Activated CD4-positive, alpha-beta T cell treated with anti-CD3 and anti-CD28 coated beads, Interleukin-2, amount 10 ng/mL, durations not matched to agents 24 days and 14 days (primary cell): ENCODE measurements at regions of chr19 and their contacts with region 1.

Region 1: GRCh38 chr19:33235269-33235995 is 9.8 kb upstream of the SLC7A10 start:
- DNase-seq: peak; percentile 92
- H3K4me3 Mint-ChIP-seq: no peak overlapping the region
- H3K27ac Mint-ChIP-seq: no peak overlapping the region
- H3K4me1 Mint-ChIP-seq: peaks cover 2% of the 10 kb centered on the region
- H3K27me3 Mint-ChIP-seq: peaks cover 4% of the 10 kb centered on the region

Region 2: GRCh38 chr19:33143897-33144405 is 91.5 kb before region 1 on chr19:
- intact Hi-C with region 1: loop called (anchors 10 kb)
- DNase-seq: peak; percentile 90
- H3K4me3 Mint-ChIP-seq: no peak overlapping the region
- H3K27ac Mint-ChIP-seq: no peak overlapping the region
- H3K4me1 Mint-ChIP-seq: peaks cover 4% of the 10 kb centered on the region
- H3K27me3 Mint-ChIP-seq: peaks cover 2% of the 10 kb centered on the region

Region 3: DNA sequence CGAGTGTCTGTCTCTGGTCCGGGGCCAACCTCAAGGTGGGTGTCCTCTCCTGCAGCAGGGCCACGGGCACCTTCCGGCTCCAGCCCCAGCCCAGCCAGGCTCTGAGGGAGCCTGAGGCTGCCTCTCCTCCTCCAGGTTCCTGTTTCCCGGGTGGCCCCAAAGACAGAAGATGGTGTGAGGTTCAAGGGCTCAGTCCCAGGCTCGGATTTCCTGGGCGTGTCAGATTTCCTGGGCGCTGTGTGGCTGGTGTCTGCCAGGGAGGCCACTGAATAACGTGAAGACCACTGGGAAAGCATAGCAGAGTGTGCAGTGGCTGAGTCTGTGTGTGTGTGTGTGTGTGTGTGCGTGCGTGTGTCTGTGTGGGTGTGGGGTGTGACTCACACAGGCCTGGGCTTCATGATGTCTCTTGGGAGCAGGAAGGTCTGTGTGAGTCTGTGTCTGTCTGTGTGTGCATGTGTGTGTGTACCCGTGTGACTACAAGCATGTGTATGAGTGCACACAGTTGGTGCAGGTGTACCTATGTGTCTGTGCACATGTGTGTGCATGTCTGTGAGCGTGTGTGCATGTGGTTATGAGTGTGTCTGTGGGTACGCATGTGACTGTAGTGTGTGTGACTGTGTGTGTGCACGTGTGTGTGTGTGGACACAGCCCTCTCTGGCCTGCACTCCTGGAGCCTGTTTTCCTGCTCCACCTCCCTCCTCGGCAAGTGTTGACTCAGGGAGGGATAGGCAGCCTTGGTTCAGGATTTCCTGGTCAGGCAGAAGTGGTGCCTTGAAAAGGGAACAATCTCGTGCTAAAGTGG is 38.6 kb after region 1 on chr19:
- intact Hi-C with region 1: loop called (anchors 5 kb)
- DNase-seq: peak; percentile 64
- H3K4me3 Mint-ChIP-seq: no peak overlapping the region
- H3K27ac Mint-ChIP-seq: peak overlapping the region; percentile 10
- H3K4me1 Mint-ChIP-seq: peaks cover 2% of the 10 kb centered on the region
- H3K27me3 Mint-ChIP-seq: no peaks in the 10 kb centered on the region

Region 4: GRCh38 chr19:33302175-33302973 is 66.9 kb after region 1 on chr19 and contains the start of gene CEBPA:
- intact Hi-C with region 1: loop called (anchors 2 kb)
- DNase-seq: peak; percentile 87
- H3K4me3 Mint-ChIP-seq: peak within 1 kb of the TSS; percentile 72
- H3K27ac Mint-ChIP-seq: no peak within 1 kb of the TSS
- H3K4me1 Mint-ChIP-seq: no peaks in the 10 kb centered on the region
- H3K27me3 Mint-ChIP-seq: peaks cover 45% of the 10 kb centered on the region
- total RNA-seq, gene CEBPA: 1.2 and 1.4 TPM in 2 replicates

Region 5: DNA sequence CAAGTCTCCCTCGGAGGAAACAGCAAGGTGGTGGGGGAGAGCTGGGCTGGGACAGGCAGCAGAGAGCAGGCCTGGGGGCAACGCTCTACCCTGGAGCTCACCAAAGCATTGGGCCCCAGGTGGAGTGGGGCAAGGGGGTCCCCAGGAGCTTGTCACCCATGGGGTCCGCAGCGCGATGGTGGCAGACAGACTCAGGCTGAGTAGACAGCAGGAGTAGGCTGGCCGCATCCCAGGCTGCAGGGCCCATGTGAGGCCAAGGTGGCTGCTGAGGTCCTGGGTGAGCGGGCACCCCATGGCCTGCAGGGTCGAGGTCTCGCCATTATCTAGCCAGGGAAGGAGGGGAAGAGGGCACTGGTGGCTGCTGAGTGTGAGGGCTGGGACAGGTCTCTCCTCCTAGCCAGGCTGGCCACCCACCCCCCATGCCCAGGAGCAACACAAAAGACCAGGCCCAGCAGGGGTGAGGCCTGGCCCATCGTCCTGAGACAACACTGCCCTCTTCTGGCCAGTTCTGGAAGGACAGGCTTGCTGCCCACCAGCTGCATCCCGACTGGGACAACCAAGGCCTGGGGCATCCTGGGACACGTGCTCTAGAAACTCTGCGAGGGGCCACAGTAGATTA is 171.2 kb after region 1 on chr19:
- intact Hi-C with region 1: loop called (anchors 1 kb)
- DNase-seq: peak; percentile 93
- H3K4me3 Mint-ChIP-seq: no peak overlapping the region
- H3K27ac Mint-ChIP-seq: no peak overlapping the region
- H3K4me1 Mint-ChIP-seq: no peaks in the 10 kb centered on the region
- H3K27me3 Mint-ChIP-seq: no peaks in the 10 kb centered on the region